ENCODE measurements at regions of chr7 and their contacts with region 1.

Region 1: GRCh38 chr7:94890216-94890615 is 17.2 kb upstream of the PPP1R9A start:
- DNase-seq: no peak

Region 2: DNA sequence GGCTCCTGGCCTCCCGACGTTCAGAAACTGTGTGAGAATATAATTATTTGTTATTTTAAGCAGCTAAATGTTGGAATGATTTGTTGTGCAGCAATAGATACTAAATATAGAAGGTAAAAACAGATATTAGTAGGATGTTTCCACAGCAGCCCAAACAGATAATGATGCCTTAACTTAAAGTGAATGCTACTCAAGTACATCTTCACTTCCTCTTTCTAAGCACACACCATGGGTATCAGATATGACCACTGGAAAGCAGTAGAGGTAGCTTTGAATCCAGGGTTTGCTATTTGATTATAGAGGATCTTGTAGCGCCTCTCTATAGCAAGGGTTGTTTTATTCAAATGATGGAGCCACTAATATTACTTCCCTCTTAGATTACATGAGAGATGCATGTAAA is 847.8 kb before region 1 on chr7:
- intact Hi-C with region 1: loop called in 1 of 2 experiments (anchors 5 kb)
- DNase-seq: no peak

Region 3: DNA sequence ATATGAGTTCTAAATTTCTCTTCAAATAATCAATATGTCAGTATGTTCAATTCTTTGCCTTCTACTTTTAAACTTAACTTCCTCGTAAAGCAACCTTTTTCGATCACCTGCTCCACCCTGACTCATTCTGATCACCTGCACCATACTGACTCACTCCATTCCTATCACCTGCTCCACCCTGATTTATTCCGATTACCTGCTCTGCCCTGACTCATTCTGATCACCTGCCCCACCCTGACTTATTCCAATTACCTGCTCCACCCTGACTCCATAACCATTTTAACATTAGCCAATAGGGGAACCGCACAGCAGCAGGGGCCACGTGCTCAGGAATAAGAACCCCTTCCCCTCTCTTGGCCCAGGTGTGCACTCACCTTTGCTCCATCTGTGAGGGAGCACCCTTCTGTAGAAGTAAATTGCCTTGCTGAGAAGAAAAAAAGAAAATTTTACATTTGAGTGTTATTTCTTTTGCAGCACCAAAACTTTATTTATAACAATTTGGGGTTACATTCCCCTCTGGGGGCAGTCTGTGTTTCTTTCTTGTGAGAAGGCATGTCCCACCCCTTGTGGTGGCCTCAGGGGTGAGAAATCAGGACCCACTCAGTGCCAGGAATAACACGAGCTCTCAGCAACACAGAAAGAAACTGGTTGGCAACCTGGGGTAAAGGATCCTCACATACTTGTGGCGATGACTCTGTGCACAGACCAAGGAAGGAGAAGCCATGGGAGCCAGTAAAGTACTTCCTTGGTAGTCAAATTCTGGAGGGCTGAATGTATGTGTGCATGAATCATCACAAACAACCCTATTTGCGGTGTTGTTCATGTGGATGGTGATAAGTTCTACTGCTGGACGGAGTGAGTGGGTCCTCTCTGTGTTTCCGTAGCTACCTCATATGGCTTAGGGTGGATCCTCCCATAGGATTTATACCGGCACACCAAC is 12.2 kb before region 1 on chr7:
- intact Hi-C with region 1: no loop called
- DNase-seq: no peak

Region 4: DNA sequence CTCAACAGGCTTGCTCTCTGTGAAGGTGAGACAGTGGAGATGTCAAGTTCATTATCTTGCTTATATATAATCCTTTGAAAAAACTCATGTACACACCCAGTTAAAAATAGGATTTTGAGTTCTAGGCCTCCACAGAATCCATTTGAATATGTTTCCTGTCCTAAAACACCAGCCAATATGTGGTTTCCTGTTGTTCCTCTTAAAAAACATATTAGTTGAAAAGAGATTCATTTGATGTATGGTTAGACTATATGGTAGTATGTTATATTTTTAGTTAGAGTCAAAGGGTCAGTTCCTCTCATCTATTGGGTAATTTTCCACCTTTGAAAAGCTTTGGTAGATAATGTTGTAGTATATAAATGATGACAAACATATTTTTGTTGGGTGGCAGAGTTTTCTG is 33.2 kb after region 1 on chr7:
- intact Hi-C with region 1: no loop called
- DNase-seq: no peak

Region 5: DNA sequence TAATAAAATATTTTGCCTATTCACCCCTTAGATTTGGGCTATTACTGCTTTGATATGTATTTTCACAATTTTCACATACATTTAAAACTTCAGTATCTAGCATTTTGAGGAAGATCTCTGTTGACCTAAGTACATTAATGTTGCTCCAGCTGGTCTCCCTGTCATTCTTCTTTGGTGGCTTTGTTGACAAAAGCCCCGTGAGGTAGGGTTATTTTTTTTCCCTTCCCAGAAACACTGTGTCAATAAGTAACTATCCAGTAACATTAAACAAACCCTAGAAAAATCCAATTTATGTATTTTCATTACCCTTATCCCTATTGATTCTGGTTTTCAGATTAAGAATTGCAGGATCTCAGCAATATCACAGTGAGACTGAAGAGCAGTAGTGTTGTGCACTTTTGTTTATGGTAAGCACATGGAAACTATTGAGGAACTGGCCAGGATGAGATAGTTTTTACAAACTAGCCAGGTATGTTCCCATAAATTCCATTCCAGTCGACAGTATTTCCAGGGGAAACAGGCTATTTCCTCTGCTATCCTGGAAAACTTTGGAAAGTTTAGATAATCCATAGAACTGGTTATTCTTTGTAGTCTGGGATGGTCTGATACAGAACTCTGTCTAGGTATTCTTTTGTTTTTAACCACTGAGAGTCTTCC is 236.0 kb after region 1 on chr7:
- intact Hi-C with region 1: no loop called
- DNase-seq: no peak